ENCODE measurements at regions of chr1 and their contacts with region 1.

Region 1: DNA sequence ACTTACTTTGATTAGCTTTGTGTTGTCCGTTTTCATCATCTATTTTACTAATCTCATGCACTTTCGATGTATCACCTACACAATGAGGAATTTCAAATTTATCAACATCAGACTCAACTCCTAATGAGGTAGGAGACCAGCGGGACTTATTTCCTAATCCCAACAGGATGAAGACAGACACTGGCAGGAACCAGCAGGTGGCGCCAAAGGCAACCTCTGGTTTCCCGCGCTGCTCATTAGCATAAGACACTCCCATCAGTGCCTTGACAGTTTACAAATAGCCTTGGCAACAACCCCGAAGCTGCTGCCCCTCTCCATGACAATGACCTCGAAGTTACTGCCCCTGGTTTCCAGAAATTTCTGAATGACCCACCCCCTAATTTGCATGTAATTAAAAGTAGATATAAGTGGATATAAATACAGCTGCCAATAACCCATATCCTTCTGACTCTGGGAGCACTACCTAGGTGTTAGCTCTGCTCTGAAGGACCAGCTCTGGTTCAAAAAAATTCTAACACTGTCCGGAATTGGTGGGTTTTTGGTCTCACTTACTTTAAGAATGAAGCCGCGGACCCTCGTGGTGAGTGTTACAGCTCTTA is 974.8 kb downstream of the ADGRL2 start:
- DNase-seq: no peak
- H3K4me3 Mint-ChIP-seq: no peak overlapping the region
- H3K27ac Mint-ChIP-seq: no peak overlapping the region
- H3K4me1 Mint-ChIP-seq: no peaks in the 10 kb centered on the region
- H3K27me3 Mint-ChIP-seq: no peaks in the 10 kb centered on the region

Region 2: GRCh38 chr1:83583351-83584014 is 808.0 kb after region 1 on chr1:
- intact Hi-C with region 1: loop called (anchors 10 kb)
- DNase-seq: peak; percentile 27
- H3K4me3 Mint-ChIP-seq: no peak overlapping the region
- H3K27ac Mint-ChIP-seq: no peak overlapping the region
- H3K4me1 Mint-ChIP-seq: no peaks in the 10 kb centered on the region
- H3K27me3 Mint-ChIP-seq: no peaks in the 10 kb centered on the region

Region 3: DNA sequence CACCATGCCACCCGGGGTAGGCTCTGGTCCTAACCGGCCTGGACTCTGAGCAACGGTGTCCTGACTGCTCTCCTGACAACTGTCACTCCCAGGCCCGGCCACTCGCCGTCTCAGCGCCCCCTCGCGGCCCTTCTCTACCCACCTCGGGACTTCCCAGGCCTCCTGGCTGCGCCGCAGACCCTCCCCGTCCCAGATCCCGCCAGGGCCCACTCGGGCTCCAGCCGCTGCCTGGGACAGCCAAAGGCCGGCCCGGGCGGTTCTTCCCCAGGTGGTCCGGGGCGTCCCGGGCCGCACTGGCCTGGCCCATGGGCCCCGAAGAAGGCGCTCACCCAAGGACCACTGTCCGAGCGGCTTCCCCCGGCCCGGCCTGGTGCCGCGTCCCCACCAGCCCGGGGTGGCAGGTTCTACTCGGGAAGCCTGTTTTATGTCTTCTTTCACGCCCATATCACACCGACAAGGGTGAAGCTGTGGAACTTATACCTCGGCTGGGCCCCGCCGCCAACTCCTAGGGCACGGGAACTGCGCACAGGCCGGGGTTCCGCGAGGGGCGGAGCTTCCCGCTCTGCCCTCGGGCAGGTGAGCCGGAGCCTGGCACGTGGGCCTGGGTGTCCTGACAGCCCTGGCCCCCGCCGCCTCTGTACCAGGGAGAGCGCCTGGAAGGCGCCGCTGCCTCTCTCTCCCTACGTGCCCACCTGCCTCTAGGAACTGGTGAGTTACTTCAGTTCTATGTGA is 1085.2 kb after region 1 on chr1:
- intact Hi-C with region 1: loop called (anchors 5 kb)
- DNase-seq: peak; percentile 60
- H3K4me3 Mint-ChIP-seq: peak overlapping the region; percentile 80
- H3K27ac Mint-ChIP-seq: peak overlapping the region; percentile 48
- H3K4me1 Mint-ChIP-seq: peaks cover 14% of the 10 kb centered on the region
- H3K27me3 Mint-ChIP-seq: no peaks in the 10 kb centered on the region

Measured in activated T-helper 1 cell treated with anti-CD3 and anti-CD28 coated beads, Interleukin-12 subunit alpha, Interleukin-12 subunit beta, Interleukin-2, Interleukin-4 antibody, amounts not matched to agents 30 ng/mL and 10 ng/mL and 1 ng/mL, durations not matched to agents 14 hours and 24 hours and 36 hours (primary cell).